Activated CD4-positive, alpha-beta memory T cell treated with anti-CD3 and anti-CD28 coated beads for 36 hours (primary cell): ENCODE measurements at regions of chr10 and their contacts with region 1.

Region 1: GRCh38 chr10:23293145-23293724 is 51.4 kb downstream of the C10orf67 start:
- DNase-seq: peak; percentile 53
- H3K4me3 Mint-ChIP-seq: no peak overlapping the region
- H3K27ac Mint-ChIP-seq: no peak overlapping the region
- H3K4me1 Mint-ChIP-seq: peaks cover 2% of the 10 kb centered on the region
- H3K27me3 Mint-ChIP-seq: peaks cover 14% of the 10 kb centered on the region

Region 2: DNA sequence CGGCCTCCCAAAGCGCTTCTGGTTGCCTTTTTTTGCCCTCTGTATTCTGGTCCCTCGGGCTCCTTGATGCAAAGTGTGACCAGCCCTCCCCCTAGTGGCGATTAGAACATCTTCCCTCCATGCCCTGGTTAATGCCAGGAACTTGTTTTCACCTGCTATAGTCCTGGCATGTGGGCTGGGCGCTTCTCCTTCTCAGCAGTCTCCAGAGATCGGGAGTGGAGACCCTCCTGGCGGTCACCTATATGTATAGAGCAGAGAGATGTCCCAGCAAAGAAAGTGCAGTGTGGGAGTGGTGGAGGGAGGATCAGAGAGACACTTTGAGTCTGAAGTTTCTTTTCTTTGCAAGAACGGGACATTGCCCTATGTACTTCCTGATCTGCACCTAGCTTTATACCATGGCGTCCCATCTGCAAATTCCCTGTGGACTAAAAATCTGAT is 409.8 kb after region 1 on chr10:
- CTCF ChIA-PET with region 1: interaction called, 5 read pairs
- POLR2A ChIA-PET with region 1: no interaction called
- intact Hi-C with region 1: loop called (anchors 5 kb)
- DNase-seq: peak; percentile 54
- H3K4me3 Mint-ChIP-seq: no peak overlapping the region
- H3K27ac Mint-ChIP-seq: no peak overlapping the region
- H3K4me1 Mint-ChIP-seq: no peaks in the 10 kb centered on the region
- H3K27me3 Mint-ChIP-seq: peaks cover 27% of the 10 kb centered on the region